AG04449 (cell line): ENCODE measurements at regions of chr2 and their contacts with region 1.

Region 1: GRCh38 chr2:120735746-120736170 is at the start of gene GLI2:
- DNase-seq: no peak
- H3K4me3 ChIP-seq: peak within 1 kb of the TSS; percentile 88
- CTCF ChIP-seq: peak; percentile 84

Region 2: DNA sequence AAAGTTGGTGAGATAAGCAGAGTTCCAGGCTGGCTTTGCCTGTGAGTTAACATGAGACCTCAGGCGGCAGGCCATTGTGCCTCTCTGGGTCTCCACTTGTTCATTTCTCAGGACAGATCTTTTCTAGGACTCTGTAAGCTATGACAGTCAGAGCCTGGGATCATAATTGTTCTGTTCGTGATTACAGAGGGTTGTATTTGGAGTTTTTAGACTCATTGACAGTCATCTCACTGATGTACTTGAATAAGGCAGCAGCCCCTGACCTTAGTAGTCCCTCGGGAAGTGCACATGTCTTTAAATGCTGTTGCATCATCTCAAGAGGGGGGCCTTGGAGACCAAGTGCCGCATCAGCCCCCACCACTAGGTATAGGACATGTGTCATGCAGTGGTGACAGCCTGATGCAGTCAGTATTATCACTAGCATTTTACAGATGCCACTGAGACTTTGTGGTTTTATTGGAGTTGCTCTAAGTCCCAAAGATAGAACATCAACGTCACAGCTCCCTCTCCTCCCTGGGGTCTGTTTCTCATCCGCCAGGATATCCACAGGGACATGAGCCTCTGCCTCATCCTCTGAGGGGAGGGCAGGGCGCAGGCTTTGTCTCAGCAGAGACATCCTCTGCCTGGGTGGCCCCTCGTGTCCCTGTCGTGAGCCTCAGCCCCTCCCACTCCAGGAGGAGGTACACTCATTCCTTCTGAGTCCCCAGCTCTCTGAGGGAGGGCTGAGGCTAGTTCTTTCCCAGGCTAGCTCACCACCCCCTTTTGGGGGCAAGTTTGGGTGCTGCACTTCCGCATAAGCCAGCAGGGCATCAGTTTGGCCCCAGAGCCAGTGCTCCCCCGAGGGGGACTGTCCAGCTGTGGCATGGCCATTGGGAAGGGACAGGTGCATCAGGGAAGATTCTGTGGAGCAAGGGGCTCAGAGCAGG is 14.0 kb after region 1 on chr2:
- CTCF ChIA-PET with region 1: interaction called, 10 read pairs
- POLR2A ChIA-PET with region 1: interaction called, 6 read pairs
- DNase-seq: peak; percentile 80
- H3K4me3 ChIP-seq: no peak overlapping the region; the same call in 1 of the 2 replicates
- CTCF ChIP-seq: no peak

Region 3: GRCh38 chr2:120758181-120759144 is 22.7 kb after region 1 on chr2:
- CTCF ChIA-PET with region 1: interaction called, 8 read pairs
- POLR2A ChIA-PET with region 1: interaction called, 11 read pairs
- DNase-seq: no peak
- H3K4me3 ChIP-seq: peak overlapping the region; percentile 8; the same call in 1 of the 2 replicates
- CTCF ChIP-seq: no peak